Activated CD8-positive, alpha-beta memory T cell treated with anti-CD3 and anti-CD28 coated beads, Interleukin-2, amount 10 ng/mL, durations not matched to agents 7 days and 5 days (primary cell): ENCODE measurements at regions of chr2 and their contacts with region 1.

Region 1: DNA sequence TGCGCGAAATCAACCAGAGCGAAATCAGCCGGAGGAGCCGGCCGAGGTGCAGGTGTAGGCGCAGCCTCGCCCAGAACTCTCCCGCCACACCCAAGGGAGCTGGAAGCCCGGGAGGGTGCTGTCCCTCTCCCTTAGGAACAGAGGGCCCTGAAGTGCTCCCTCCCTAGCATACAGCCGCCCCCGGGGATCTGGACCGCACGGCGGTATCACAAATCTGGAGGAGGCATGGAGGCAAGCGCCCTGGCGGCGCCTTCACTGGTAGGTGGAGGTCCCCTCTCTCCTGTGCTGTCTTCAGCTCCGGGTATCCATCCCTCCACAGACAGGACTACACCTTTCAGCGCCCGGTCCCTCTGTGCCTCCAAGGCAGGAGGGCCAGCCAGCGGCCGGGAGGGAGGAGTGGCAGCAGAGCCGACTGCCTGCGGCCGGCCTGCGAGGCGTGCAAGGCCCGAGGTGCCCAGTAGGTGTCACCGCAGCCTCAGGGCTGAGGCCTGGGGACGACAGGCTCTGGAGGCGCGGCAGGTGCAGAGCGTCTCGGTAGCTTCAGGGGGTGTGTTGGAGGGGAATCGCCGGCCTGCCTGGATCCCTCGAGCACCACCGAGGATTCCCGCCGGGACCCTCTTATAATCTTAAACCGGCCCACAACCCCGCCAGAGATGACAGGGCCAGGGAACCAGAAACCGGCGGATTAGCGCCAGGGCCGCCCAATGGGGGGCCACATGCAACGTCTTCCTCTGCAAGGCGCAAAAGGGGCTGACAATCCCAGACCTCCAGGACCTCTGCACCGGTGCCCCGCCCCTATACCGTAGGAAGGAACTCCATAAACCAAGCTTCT is 2.8 kb downstream of the IHH start:
- DNase-seq: peak; percentile 84
- ATAC-seq: peak; percentile 91
- H3K4me3 Mint-ChIP-seq: peak overlapping the region; percentile 39
- H3K27ac Mint-ChIP-seq: no peak overlapping the region
- H3K4me1 Mint-ChIP-seq: peaks cover 22% of the 10 kb centered on the region
- H3K27me3 Mint-ChIP-seq: peaks cover 64% of the 10 kb centered on the region

Region 2: GRCh38 chr2:218979846-218980734 is 77.8 kb before region 1 on chr2:
- CTCF ChIA-PET with region 1: interaction called, 10 read pairs
- DNase-seq: peak; percentile 87
- ATAC-seq: peak; percentile 94
- H3K4me3 Mint-ChIP-seq: no peak overlapping the region
- H3K27ac Mint-ChIP-seq: no peak overlapping the region
- H3K4me1 Mint-ChIP-seq: peaks cover 10% of the 10 kb centered on the region
- H3K27me3 Mint-ChIP-seq: peaks cover 83% of the 10 kb centered on the region

Region 3: DNA sequence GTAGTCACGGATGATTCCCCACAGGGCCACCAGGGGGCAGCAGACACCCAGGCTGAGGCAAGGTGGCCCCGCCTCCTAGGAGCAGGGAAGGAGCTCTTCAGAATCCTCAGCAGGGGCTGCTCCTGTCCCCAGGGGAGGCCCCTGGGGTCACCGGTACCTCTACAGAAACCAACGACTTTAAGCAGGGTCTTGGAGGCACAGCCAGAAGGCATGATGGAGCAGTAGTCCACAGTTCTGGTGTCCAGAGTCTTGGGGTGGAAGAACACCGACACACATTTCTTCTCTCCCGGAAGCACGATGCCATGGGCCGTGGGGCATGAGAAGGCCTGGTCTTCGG is 28.1 kb before region 1 on chr2:
- CTCF ChIA-PET with region 1: interaction called, 38 read pairs
- DNase-seq: peak; percentile 78
- ATAC-seq: peak; percentile 88
- H3K4me3 Mint-ChIP-seq: no peak overlapping the region
- H3K27ac Mint-ChIP-seq: no peak overlapping the region
- H3K4me1 Mint-ChIP-seq: no peaks in the 10 kb centered on the region
- H3K27me3 Mint-ChIP-seq: peaks cover 25% of the 10 kb centered on the region

Region 4: DNA sequence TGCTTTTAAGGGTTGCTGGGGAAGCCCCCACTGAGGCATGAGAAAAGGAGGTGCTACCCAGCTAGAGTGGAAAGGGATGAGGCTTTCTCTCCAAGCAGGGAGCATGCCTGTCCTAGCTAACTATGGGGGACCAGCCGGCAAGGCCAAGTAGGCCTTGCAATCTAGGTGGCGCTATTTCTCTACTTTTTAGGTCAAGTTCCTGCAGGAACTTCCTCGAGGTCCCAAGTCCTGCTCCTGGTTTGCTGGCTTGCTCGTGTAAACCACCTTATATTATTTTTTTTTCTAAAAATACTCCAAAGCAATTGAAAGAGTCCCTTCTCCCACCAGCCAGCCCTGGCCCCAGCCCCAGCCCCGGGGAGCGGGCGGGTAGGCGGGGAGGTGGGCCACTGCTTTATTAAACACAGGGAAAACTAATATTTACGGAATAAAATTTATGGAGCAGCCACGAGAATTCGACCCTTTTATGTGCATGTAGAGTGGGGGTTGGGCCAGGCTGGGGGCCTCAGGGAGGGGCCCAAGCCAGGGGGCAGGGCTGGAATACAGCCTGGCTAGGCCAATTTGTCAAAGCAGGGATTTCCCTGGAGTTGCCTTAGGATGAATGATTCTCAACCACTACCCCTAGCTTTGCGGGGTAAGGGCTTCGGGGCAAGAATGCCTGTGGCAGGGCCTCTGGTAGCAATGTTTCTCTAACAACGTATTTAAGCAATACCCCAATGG is 15.6 kb after region 1 on chr2:
- CTCF ChIA-PET with region 1: interaction called, 29 read pairs
- DNase-seq: no peak
- ATAC-seq: no peak
- H3K4me3 Mint-ChIP-seq: no peak overlapping the region
- H3K27ac Mint-ChIP-seq: no peak overlapping the region
- H3K4me1 Mint-ChIP-seq: no peaks in the 10 kb centered on the region
- H3K27me3 Mint-ChIP-seq: no peaks in the 10 kb centered on the region

Region 5: GRCh38 chr2:219104107-219105035 is 46.4 kb after region 1 on chr2:
- CTCF ChIA-PET with region 1: interaction called, 25 read pairs
- DNase-seq: no peak
- ATAC-seq: peak; percentile 57
- H3K4me3 Mint-ChIP-seq: no peak overlapping the region
- H3K27ac Mint-ChIP-seq: no peak overlapping the region
- H3K4me1 Mint-ChIP-seq: peaks cover 3% of the 10 kb centered on the region
- H3K27me3 Mint-ChIP-seq: no peaks in the 10 kb centered on the region

Region 6: GRCh38 chr2:219160186-219161017 is 102.5 kb after region 1 on chr2 and contains the start of gene NHEJ1:
- CTCF ChIA-PET with region 1: interaction called, 124 read pairs
- DNase-seq: peak; percentile 96
- ATAC-seq: peak; percentile 87
- H3K4me3 Mint-ChIP-seq: peak within 1 kb of the TSS; percentile 80
- H3K27ac Mint-ChIP-seq: peak within 1 kb of the TSS; percentile 93
- H3K4me1 Mint-ChIP-seq: peaks cover 19% of the 10 kb centered on the region
- H3K27me3 Mint-ChIP-seq: no peaks in the 10 kb centered on the region
- total RNA-seq, gene NHEJ1: 14.4 to 19.4 TPM

Region 7: GRCh38 chr2:219186754-219187456 is 129.0 kb after region 1 on chr2:
- CTCF ChIA-PET with region 1: no interaction called
- DNase-seq: no peak
- ATAC-seq: no peak
- H3K4me3 Mint-ChIP-seq: no peak overlapping the region
- H3K27ac Mint-ChIP-seq: peak overlapping the region; percentile 33
- H3K4me1 Mint-ChIP-seq: peaks cover 28% of the 10 kb centered on the region
- H3K27me3 Mint-ChIP-seq: no peaks in the 10 kb centered on the region

Region 8: DNA sequence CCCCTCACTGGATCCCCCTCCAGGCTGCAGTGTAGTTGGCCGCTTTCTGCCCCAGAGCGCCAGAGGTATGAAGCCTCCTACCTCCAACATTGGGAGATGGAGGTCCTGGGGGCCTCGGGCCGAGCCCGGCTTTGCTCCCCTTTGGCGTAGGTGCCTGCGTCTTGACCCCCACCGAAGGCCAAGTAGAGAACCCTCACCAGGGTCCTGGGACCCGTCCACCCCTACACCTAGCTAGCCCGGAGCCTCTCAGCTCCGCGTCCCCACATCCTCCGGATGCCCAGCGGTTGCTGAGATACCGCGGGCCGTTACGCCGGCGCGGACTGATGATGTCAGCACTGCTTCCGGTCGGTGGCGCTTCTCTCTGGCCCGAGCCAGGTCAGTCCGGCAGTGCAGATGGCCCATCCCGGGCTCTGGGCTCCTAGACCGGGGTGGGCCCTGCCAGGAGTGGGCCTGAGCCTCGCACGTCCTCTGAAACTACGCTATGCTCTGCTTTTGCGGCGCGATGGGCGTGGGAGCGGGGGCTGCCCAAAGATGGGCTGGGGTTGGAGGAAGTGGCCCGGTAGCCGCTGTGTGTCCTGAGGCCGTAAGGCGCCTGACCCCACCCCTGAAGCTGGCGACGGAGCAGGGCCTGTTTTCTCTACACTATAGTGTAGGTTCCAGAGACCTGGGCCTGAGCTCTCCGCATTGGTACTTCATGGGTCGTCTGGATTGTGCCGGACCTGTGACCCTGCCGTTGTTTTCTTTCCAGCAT is 187.4 kb after region 1 on chr2 and contains the starts of genes GLB1L and STK16:
- CTCF ChIA-PET with region 1: no interaction called
- DNase-seq: peak; percentile 94
- ATAC-seq: peak; percentile 75
- H3K4me3 Mint-ChIP-seq: peak within 1 kb of the TSS; percentile 99
- H3K27ac Mint-ChIP-seq: peak within 1 kb of the TSS; percentile 100
- H3K4me1 Mint-ChIP-seq: peaks cover 61% of the 10 kb centered on the region
- H3K27me3 Mint-ChIP-seq: no peaks in the 10 kb centered on the region
- total RNA-seq, gene GLB1L: 4.3 to 4.9 TPM
- total RNA-seq, gene STK16: 37.3 to 41.7 TPM